ENCODE measurements at regions of chr6 and their contacts with region 1.

Region 1: DNA sequence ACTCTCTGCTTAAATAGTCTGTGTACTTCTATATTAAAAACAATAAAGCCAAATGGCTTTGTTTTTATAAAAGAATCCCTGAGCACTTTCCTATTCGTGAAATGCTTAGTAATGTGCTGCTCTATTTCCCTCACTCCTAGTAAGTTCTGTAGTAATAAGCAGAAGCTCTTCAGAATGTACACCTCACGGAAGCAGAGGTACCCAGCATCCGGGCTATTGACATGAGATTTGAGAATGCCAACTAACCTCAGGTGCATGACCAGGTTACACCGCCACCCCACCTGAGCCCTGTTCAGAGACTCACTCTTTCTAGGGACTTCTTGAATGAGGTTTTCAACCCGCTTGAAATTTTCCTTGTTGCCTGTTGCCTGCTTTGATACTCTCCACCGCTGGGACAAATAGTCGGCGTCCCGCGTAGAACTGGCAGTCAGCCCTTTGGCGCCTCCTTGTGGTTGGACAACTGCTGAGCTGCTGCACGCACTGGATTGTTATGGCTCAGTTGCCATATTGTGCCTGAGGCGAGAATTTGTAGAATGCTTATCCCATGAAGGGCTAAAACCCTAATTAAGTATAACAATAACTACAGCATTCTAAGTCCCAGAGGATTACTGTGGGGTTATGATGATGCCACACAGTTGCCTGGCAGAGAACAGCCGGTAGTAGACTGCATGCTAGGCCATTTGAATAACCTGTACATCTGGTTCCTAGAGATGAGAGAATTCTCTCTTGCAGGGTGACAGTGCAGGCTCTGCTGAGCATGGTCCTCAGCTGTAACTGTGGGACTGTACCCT is 95.4 kb downstream of the KHDC1L start:
- DNase-seq: peak; percentile 88
- ATAC-seq: peak; percentile 96
- H3K4me3 Mint-ChIP-seq: no peak overlapping the region
- H3K27ac Mint-ChIP-seq: no peak overlapping the region
- H3K4me1 Mint-ChIP-seq: peaks cover 3% of the 10 kb centered on the region
- H3K27me3 Mint-ChIP-seq: no peaks in the 10 kb centered on the region

Region 2: DNA sequence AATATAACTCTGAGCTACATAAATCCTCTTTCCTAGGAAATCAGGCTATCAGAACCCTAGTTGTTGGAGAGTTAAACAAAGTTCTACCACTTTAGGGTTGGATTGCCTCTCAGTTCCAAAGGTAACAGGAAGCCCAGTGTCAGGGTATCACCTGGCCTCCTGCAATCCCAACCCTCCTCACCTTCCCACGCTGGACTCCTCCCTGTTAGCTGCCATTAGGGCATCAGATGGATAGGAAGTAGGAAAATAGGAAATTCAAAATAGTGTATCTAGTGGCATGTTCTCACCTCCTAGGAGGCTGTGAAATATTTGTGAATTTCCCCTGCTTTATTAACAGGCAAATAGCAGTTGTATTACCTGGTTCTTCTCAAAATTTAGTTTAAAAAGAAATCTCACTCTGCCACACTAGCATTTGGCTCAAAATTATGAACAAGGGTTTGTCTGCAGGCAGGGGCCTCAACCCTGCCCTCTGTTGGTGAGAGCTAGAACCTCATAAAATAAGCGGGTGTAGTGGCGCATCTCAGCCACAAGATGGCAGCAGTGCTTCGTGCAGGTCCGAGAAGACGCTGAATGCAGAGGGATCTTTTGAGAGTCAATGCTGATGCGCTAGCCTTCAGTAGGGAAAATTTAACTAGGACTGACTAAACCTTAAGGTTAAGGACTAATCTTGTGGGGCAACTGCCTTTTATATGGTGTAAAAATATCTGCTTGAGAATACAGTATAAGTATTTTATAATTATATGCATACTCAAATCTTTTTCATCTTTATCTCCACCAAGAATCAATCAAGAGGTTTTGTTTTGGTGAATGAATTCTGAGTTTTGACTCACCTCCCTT is 717.8 kb before region 1 on chr6:
- CTCF ChIA-PET with region 1: interaction called, 45 read pairs
- POLR2A ChIA-PET with region 1: no interaction called
- DNase-seq: peak; percentile 78
- ATAC-seq: peak; percentile 75
- H3K4me3 Mint-ChIP-seq: no peak overlapping the region
- H3K27ac Mint-ChIP-seq: no peak overlapping the region
- H3K4me1 Mint-ChIP-seq: no peaks in the 10 kb centered on the region
- H3K27me3 Mint-ChIP-seq: peaks cover 5% of the 10 kb centered on the region

Region 3: GRCh38 chr6:73109659-73110058 is 20.2 kb before region 1 on chr6:
- CTCF ChIA-PET with region 1: interaction called, 10 read pairs
- POLR2A ChIA-PET with region 1: no interaction called
- DNase-seq: no peak
- ATAC-seq: no peak
- H3K4me3 Mint-ChIP-seq: no peak overlapping the region
- H3K27ac Mint-ChIP-seq: no peak overlapping the region
- H3K4me1 Mint-ChIP-seq: no peaks in the 10 kb centered on the region
- H3K27me3 Mint-ChIP-seq: no peaks in the 10 kb centered on the region

Region 4: GRCh38 chr6:73116330-73116729 is 13.5 kb before region 1 on chr6:
- CTCF ChIA-PET with region 1: interaction called, 10 read pairs
- POLR2A ChIA-PET with region 1: no interaction called
- DNase-seq: no peak
- ATAC-seq: no peak
- H3K4me3 Mint-ChIP-seq: no peak overlapping the region
- H3K27ac Mint-ChIP-seq: no peak overlapping the region
- H3K4me1 Mint-ChIP-seq: no peaks in the 10 kb centered on the region
- H3K27me3 Mint-ChIP-seq: no peaks in the 10 kb centered on the region

Region 5: GRCh38 chr6:73152966-73153757 is 23.3 kb after region 1 on chr6:
- CTCF ChIA-PET with region 1: interaction called, 10 read pairs
- POLR2A ChIA-PET with region 1: no interaction called
- DNase-seq: no peak
- ATAC-seq: no peak
- H3K4me3 Mint-ChIP-seq: no peak overlapping the region
- H3K27ac Mint-ChIP-seq: no peak overlapping the region
- H3K4me1 Mint-ChIP-seq: no peaks in the 10 kb centered on the region
- H3K27me3 Mint-ChIP-seq: no peaks in the 10 kb centered on the region

Region 6: GRCh38 chr6:73372516-73372915 is 242.7 kb after region 1 on chr6:
- CTCF ChIA-PET with region 1: no interaction called
- POLR2A ChIA-PET with region 1: no interaction called
- DNase-seq: no peak
- ATAC-seq: no peak
- H3K4me3 Mint-ChIP-seq: no peak overlapping the region
- H3K27ac Mint-ChIP-seq: no peak overlapping the region
- H3K4me1 Mint-ChIP-seq: no peaks in the 10 kb centered on the region
- H3K27me3 Mint-ChIP-seq: peaks cover 6% of the 10 kb centered on the region

Measured in activated CD8-positive, alpha-beta T cell treated with anti-CD3 and anti-CD28 coated beads, Interleukin-2, amount 10 ng/mL, durations not matched to agents 7 days and 5 days (primary cell).